Activated CD4-positive, alpha-beta T cell treated with anti-CD3 and anti-CD28 coated beads, Interleukin-2, amount 10 ng/mL, durations not matched to agents 24 days and 14 days (primary cell): ENCODE measurements at regions of chr11 and their contacts with region 1.

Region 1: GRCh38 chr11:117107701-117108590 is 9.7 kb upstream of the SIK3 start:
- DNase-seq: no peak
- H3K4me3 Mint-ChIP-seq: no peak overlapping the region
- H3K27ac Mint-ChIP-seq: no peak overlapping the region
- H3K4me1 Mint-ChIP-seq: no peaks in the 10 kb centered on the region
- H3K27me3 Mint-ChIP-seq: peaks cover 5% of the 10 kb centered on the region

Region 2: GRCh38 chr11:116732271-116733042 is 375.5 kb before region 1 on chr11:
- intact Hi-C with region 1: loop called (anchors 1 kb)
- DNase-seq: peak; percentile 86
- H3K4me3 Mint-ChIP-seq: no peak overlapping the region
- H3K27ac Mint-ChIP-seq: no peak overlapping the region
- H3K4me1 Mint-ChIP-seq: peaks cover 11% of the 10 kb centered on the region
- H3K27me3 Mint-ChIP-seq: no peaks in the 10 kb centered on the region

Region 3: GRCh38 chr11:116879800-116880625 is 227.9 kb before region 1 on chr11:
- intact Hi-C with region 1: loop called (anchors 1 kb)
- DNase-seq: peak; percentile 80
- H3K4me3 Mint-ChIP-seq: no peak overlapping the region
- H3K27ac Mint-ChIP-seq: no peak overlapping the region
- H3K4me1 Mint-ChIP-seq: peaks cover 15% of the 10 kb centered on the region
- H3K27me3 Mint-ChIP-seq: no peaks in the 10 kb centered on the region

Region 4: GRCh38 chr11:117327567-117328374 is 219.8 kb after region 1 on chr11 and contains the start of gene CEP164:
- intact Hi-C with region 1: no loop called
- DNase-seq: peak; percentile 98
- H3K4me3 Mint-ChIP-seq: peak within 1 kb of the TSS; percentile 62
- H3K27ac Mint-ChIP-seq: peak within 1 kb of the TSS; percentile 68
- H3K4me1 Mint-ChIP-seq: peaks cover 15% of the 10 kb centered on the region
- H3K27me3 Mint-ChIP-seq: peaks cover 9% of the 10 kb centered on the region
- total RNA-seq, gene CEP164: 39.0 and 40.1 TPM in 2 replicates